Mammary epithelial cell (primary cell): ENCODE measurements at regions of chrX and their contacts with region 1.

Region 1: DNA sequence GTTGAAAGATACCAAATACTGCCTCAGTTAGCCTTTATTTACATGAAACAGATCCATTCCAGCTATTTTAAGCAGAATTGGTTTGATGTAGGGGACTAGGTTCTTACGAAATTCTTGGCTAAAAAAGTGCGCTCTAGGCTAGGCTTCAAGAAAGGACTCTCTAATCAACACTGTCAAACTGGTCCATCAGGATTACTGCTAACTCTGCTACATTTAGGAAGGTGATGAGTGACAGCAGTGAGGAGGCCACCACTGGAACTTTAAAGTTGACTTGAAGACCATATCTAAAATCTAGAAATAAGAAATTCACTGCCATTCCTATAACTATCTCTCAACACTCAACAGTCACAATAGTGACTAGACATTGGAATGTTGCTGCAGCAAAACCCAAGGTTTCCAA is 27.7 kb upstream of the IL1RAPL2 start:
- DNase-seq: no peak
- H3K4me3 ChIP-seq: no peak overlapping the region
- H3K27ac ChIP-seq: no peak overlapping the region
- H3K4me1 ChIP-seq: no peaks in the 10 kb centered on the region
- H3K27me3 ChIP-seq: no peaks in the 10 kb centered on the region
- CTCF ChIP-seq: no peak

Region 2: GRCh38 chrX:104469771-104470170 is 68.6 kb before region 1 on chrX:
- CTCF ChIA-PET with region 1: no interaction called
- dilution Hi-C with region 1: loop called (anchors 5 kb)
- in situ Hi-C with region 1: no loop called
- intact Hi-C with region 1: no loop called
- DNase-seq: no peak
- H3K4me3 ChIP-seq: no peak overlapping the region
- H3K27ac ChIP-seq: no peak overlapping the region
- H3K4me1 ChIP-seq: peaks cover 8% of the 10 kb centered on the region
- H3K27me3 ChIP-seq: peaks cover 3% of the 10 kb centered on the region
- CTCF ChIP-seq: no peak